ENCODE measurements at regions of chr17 and their contacts with region 1.

Region 1: GRCh38 chr17:6927290-6928126 is 68.3 kb upstream of the ALOX12 start:
- ATAC-seq: peak in 2 of 8 experiments; percentile 94 to 97
- H3K4me3 ChIP-seq: no peak overlapping the region
- H3K27ac ChIP-seq: no peak overlapping the region
- H3K4me1 ChIP-seq: no peaks in the 10 kb centered on the region

Region 2: GRCh38 chr17:6981426-6981825 is 53.9 kb after region 1 on chr17:
- in situ Hi-C with region 1: loop called in 1 of 9 experiments (anchors 10 kb)
- ATAC-seq: no peak
- H3K4me3 ChIP-seq: no peak overlapping the region
- H3K27ac ChIP-seq: no peak overlapping the region
- H3K4me1 ChIP-seq: no peaks in the 10 kb centered on the region

Region 3: DNA sequence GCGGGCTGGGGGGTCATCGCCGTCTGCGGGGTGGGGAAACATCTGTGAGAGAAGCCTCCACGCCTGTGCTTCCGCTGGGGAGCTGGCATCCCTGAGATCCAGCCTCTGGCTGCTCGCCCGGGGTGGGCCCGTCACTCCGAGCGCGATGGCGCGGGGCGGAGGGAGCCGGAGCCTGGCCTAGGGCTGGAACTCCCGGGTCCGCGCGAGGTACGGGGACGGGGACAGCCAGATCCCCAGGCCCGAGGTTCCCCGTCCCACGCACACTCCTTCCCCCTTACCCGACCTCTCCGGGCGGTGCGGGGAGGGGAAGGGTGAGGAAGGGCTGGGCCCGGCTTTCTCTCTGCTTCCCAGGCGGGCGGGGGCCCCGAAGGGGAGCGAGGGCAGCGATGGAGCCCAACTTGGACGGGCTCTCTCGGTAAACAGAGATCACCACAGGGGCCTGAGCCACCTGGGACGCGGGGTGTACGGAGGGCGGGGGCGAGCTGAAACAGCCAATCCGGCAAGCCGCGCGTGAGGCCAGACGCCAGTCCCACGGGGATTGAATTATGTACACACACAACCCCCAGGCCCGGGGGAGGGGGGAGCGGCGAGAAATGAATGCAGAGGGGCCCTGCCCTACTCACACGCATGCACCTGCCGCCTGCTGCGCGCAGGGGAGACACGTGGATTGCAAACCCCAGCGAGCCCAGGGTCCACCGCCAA is 116.1 kb after region 1 on chr17 and contains the start of gene SLC16A11:
- in situ Hi-C with region 1: no loop called
- ATAC-seq: peak; percentile 45 to 82 (median 72)
- H3K4me3 ChIP-seq: peak within 1 kb of the TSS in 4 of 5 donors; percentile 2 to 22 (median 16)
- H3K27ac ChIP-seq: no peak within 1 kb of the TSS
- H3K4me1 ChIP-seq: peaks cover 13 to 42% of the 10 kb centered on the region in 2 donors
- total RNA-seq, gene SLC16A11: 0.17 to 1.9 (median 0.34) TPM

Measured in motor neuron (in vitro differentiated cells).